ENCODE measurements at regions of chr1 and their contacts with region 1.

Region 1: GRCh38 chr1:45686317-45687013 is at the start of gene GPBP1L1:
- DNase-seq: peak; percentile 98 to 99
- ATAC-seq: peak; percentile 69 to 89 (median 71)
- H3K4me3 ChIP-seq: peak within 1 kb of the TSS; percentile 90
- H3K4me3 Mint-ChIP-seq: peak within 1 kb of the TSS; percentile 99
- H3K27ac ChIP-seq: peak within 1 kb of the TSS; percentile 97
- H3K27ac Mint-ChIP-seq: peak within 1 kb of the TSS; percentile 100
- H3K4me1 ChIP-seq: peaks cover 27% of the 10 kb centered on the region
- H3K4me1 Mint-ChIP-seq: peaks cover 44 to 47% of the 10 kb centered on the region in 2 donors
- H3K27me3 ChIP-seq: no peaks in the 10 kb centered on the region
- H3K27me3 Mint-ChIP-seq: no peaks in the 10 kb centered on the region
- CTCF ChIP-seq: no peak
- total RNA-seq, gene GPBP1L1: 144 to 176 (median 153) TPM

Region 2: GRCh38 chr1:44775078-44775929 is 911.2 kb before region 1 on chr1 and contains the start of gene RPS8:
- intact Hi-C with region 1: loop called (anchors 5 kb)
- DNase-seq: peak; percentile 84 to 96
- ATAC-seq: peak; percentile 83 to 89 (median 86)
- H3K4me3 ChIP-seq: peak within 1 kb of the TSS; percentile 65
- H3K4me3 Mint-ChIP-seq: peak within 1 kb of the TSS; percentile 99
- H3K27ac ChIP-seq: peak within 1 kb of the TSS; percentile 85
- H3K27ac Mint-ChIP-seq: peak within 1 kb of the TSS; percentile 92 to 97
- H3K4me1 ChIP-seq: peaks cover 26% of the 10 kb centered on the region
- H3K4me1 Mint-ChIP-seq: peaks cover 30 to 36% of the 10 kb centered on the region in 2 donors
- H3K27me3 ChIP-seq: no peaks in the 10 kb centered on the region
- H3K27me3 Mint-ChIP-seq: no peaks in the 10 kb centered on the region
- CTCF ChIP-seq: no peak
- total RNA-seq, gene RPS8: 848 to 1,092 (median 1,009) TPM

Region 3: DNA sequence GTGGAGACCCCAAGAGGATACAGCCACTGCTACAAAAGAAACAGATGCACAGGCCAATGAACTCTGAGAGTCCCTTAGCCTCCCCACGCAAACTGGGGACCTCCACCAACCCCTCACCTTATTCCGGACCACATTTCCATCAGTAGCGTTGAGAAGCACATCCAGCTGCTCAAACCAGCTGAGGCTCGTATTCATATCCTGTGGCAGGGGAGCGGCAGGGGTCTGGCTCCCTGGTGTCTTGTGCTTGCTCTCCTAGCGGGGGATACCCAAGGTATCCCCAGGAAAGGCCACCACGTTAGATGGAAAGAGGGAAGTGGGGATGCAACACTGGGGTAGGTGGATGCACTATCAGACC is 187.1 kb before region 1 on chr1:
- intact Hi-C with region 1: loop called (anchors 1 kb)
- DNase-seq: no peak
- ATAC-seq: no peak
- H3K4me3 ChIP-seq: peak overlapping the region; percentile 58
- H3K4me3 Mint-ChIP-seq: peak overlapping the region; percentile 94
- H3K27ac ChIP-seq: peak overlapping the region; percentile 46
- H3K27ac Mint-ChIP-seq: peak overlapping the region; percentile 83 to 90
- H3K4me1 ChIP-seq: peaks cover 17% of the 10 kb centered on the region
- H3K4me1 Mint-ChIP-seq: peaks cover 26 to 28% of the 10 kb centered on the region in 2 donors
- H3K27me3 ChIP-seq: no peaks in the 10 kb centered on the region
- H3K27me3 Mint-ChIP-seq: no peaks in the 10 kb centered on the region
- CTCF ChIP-seq: no peak

Region 4: DNA sequence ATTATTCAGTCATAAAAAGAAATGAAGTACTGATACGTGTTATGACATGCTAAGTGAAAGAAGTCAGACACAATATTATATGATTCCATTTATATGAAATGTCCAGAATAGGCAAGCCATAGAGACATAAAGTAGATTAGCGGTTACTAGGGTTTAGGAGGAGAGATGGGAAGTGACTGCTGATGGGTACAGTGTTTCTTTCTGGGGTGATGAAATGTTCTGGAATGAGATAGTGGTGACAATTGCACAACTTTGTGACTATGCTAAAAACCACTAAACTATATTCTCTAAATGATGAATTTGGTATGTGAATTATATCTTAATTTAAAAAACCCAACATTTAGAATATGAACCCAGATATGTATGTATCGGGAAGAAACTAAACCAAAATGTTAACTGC is 36.3 kb after region 1 on chr1:
- intact Hi-C with region 1: no loop called
- DNase-seq: no peak
- ATAC-seq: no peak
- H3K4me3 ChIP-seq: no peak overlapping the region
- H3K4me3 Mint-ChIP-seq: no peak overlapping the region
- H3K27ac ChIP-seq: no peak overlapping the region
- H3K27ac Mint-ChIP-seq: no peak overlapping the region
- H3K4me1 ChIP-seq: no peaks in the 10 kb centered on the region
- H3K4me1 Mint-ChIP-seq: no peaks in the 10 kb centered on the region
- H3K27me3 ChIP-seq: no peaks in the 10 kb centered on the region
- H3K27me3 Mint-ChIP-seq: no peaks in the 10 kb centered on the region
- CTCF ChIP-seq: no peak

Region 5: DNA sequence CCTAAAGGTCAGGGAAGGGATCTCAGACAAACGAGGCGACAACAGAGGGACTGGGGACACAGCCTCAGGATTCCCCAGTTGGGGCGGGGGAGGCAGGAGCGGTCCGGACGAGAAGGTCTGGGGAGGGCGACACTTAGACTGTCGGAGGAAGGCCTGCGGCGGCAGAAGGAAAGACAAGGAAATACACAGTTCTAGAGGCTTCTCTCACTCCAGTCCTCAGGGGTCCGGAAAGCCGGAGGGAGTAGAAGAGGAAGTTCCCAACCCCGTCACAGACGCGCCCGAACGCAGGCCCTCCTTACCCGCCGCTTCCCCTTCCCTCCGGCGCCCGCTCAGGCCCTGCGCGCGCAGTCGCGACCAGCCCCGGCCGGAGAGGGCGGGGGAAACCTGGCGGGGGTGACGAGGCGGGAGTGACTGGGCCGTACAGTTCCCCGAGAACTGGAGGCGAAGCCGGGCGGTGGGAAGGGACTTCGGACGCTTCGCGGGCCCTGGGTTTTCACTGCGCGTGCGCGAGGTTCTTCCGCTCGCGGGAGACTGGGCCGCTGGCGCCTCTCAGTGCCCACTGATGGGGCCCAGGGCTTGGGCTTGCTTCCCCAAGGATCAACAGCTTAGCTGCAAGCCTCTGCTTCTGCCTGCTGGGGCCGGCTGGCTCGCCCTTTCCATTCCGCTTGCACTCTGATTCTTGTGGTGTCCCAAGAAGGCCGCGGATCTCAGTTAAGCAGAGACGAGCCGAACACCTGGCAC is 64.0 kb after region 1 on chr1 and contains the start of gene IPP:
- intact Hi-C with region 1: loop called (anchors 1 kb)
- DNase-seq: peak; percentile 89 to 96
- ATAC-seq: peak; percentile 93 to 98 (median 95)
- H3K4me3 ChIP-seq: peak within 1 kb of the TSS; percentile 91
- H3K4me3 Mint-ChIP-seq: peak within 1 kb of the TSS; percentile 98
- H3K27ac ChIP-seq: peak within 1 kb of the TSS; percentile 99
- H3K27ac Mint-ChIP-seq: peak within 1 kb of the TSS; percentile 99
- H3K4me1 ChIP-seq: peaks cover 18% of the 10 kb centered on the region
- H3K4me1 Mint-ChIP-seq: peaks cover 14 to 19% of the 10 kb centered on the region in 2 donors
- H3K27me3 ChIP-seq: no peaks in the 10 kb centered on the region
- H3K27me3 Mint-ChIP-seq: no peaks in the 10 kb centered on the region
- CTCF ChIP-seq: peak; percentile 27
- total RNA-seq, gene IPP: 15.3 to 20.8 (median 19.1) TPM

Region 6: DNA sequence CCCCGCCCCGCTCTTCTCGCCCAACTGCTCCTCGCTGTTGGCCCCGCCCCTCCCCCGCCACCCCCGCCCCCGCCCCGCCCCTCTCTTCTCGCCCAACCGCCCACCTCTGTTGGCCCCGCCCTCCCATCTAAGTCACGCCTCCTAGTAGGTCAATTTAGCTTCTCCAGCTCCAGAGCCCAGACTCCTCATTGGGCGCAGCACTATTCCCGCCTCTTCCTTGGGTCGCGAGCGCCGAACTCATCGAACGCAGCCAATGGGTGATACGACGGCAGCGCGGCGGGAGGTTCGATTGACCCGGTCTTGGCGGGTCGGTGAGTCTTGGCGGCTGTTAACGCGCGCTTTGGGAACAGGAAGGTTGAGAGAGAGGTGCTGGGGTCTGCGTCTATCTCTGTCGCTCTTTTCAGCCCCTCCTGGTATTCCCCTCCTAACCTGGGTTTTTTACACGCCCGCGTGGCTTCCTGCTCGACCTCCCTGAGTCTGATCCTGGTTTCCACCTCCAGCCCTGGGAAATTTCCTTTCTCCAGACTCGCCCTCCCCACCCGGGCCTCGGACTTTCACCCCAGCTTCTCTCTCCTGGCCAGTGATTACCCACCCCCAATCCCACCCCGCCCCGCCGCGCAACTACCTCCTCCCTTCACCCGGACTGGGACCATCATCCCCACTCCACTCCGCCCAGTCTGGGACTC is 561.1 kb after region 1 on chr1 and contains the start of gene RAD54L:
- intact Hi-C with region 1: loop called (anchors 5 kb)
- DNase-seq: peak; percentile 92 to 99
- ATAC-seq: peak; percentile 94 to 99 (median 96)
- H3K4me3 ChIP-seq: peak within 1 kb of the TSS; percentile 70
- H3K4me3 Mint-ChIP-seq: peak within 1 kb of the TSS; percentile 89
- H3K27ac ChIP-seq: peak within 1 kb of the TSS; percentile 62
- H3K27ac Mint-ChIP-seq: peak within 1 kb of the TSS; percentile 68 to 89
- H3K4me1 ChIP-seq: peaks cover 19% of the 10 kb centered on the region
- H3K4me1 Mint-ChIP-seq: peaks cover 0 to 21% of the 10 kb centered on the region in 2 donors
- H3K27me3 ChIP-seq: no peaks in the 10 kb centered on the region
- H3K27me3 Mint-ChIP-seq: no peaks in the 10 kb centered on the region
- CTCF ChIP-seq: no peak
- total RNA-seq, gene RAD54L: 1.8 to 2.3 (median 1.8) TPM